Aorta (tissue), 5 donors: ENCODE measurements at regions of chr14 and their contacts with region 1.

Region 1: GRCh38 chr14:75427482-75428229 is at the start of gene JDP2:
- DNase-seq: peak; percentile 96 to 98
- ATAC-seq: peak; percentile 91
- H3K4me3 ChIP-seq: peak within 1 kb of the TSS; percentile 85 to 92
- H3K27ac ChIP-seq: peak within 1 kb of the TSS in 1 of 2 donors; percentile 41
- H3K4me1 ChIP-seq: peaks cover 0 to 12% of the 10 kb centered on the region in 2 donors
- H3K27me3 ChIP-seq: no peaks in the 10 kb centered on the region
- total RNA-seq, gene JDP2: 48.3 to 50.2 TPM

Region 2: GRCh38 chr14:75361751-75362433 is 65.8 kb before region 1 on chr14:
- intact Hi-C with region 1: loop called in 1 of 2 experiments (anchors 5 kb)
- DNase-seq: peak; percentile 67 to 84
- ATAC-seq: peak; percentile 71
- H3K4me3 ChIP-seq: no peak overlapping the region
- H3K27ac ChIP-seq: peak overlapping the region in 1 of 2 donors; percentile 41
- H3K4me1 ChIP-seq: no peaks in the 10 kb centered on the region
- H3K27me3 ChIP-seq: no peaks in the 10 kb centered on the region

Region 3: DNA sequence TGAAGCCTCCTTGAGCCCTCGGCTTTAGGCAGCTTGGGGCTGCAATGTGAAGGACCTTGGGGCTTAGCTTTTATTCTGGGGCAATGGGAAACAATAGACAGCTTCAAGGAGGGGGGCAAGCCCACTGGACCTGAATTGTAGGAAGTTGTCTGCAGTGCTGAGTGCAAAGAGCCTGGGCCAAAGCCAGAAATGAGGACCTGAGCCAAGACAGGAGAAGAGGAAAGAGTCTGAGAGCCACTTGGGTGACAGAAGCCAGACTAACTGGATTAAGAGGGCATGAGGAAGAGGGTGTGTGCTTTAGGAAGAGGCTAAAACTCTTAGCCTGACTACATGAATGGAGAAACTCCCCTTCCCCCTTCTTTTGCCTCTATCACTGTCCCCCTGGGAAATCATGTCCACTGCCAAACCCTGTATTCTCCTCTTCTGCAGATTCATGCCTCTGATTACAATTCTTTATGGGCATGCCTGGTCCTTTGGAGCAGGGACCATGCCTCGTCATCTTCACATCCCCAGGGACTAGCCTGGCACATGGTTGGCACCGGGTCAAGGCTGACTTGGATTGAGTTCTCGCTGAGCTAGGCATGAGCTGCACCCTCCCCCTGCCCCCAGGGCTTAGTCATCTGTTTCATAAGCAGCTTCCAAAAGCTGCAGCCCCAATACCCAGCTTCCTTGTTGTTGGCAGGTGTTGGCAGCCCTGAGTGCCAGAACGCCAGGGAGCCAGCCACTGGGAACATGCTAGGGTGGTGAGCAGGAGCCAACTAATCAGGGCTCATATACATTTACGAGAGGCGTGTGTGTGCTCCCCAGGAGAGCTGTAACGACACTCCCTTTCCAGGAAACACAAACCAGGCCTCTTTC is 27.6 kb before region 1 on chr14:
- intact Hi-C with region 1: loop called in 1 of 2 experiments (anchors 2 kb)
- DNase-seq: peak; percentile 97
- ATAC-seq: peak; percentile 90
- H3K4me3 ChIP-seq: no peak overlapping the region
- H3K27ac ChIP-seq: peak overlapping the region in 1 of 2 donors; percentile 7
- H3K4me1 ChIP-seq: no peaks in the 10 kb centered on the region
- H3K27me3 ChIP-seq: no peaks in the 10 kb centered on the region

Region 4: DNA sequence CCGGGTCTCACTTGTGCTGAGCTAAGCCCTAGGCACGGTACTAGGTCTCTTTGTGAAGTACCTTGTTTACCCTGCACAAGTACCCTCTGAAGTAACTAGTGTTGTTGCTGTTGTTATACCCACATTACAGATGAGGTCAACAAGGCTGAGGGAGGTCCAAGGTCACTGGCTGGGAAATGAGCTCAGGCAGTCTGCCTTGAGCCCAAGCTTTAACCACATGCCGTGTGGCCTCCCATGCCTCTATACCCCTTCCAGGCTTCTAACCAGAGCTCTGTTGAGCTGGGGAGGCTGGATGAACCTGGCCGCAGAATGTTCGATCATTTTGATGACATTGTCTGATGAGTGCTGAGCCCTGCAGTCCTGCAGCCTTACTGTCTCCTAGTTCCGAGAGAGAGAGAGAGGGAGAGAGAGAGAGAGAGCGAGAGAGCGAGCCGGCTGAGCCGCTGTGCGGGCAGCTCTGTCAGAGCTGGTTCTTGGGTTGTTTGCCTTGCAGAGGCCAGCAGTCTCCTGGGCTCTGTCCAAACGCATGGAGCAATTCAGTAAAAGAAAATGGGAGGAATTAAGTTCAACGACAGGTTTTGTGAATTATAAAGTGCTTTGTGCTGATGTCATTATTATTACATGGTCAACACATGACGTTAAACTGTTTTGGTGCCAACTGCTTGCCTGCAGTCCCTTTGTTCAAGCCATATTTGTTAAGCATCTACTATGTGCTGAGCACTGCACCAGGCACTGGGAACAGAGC is 13.2 kb after region 1 on chr14:
- intact Hi-C with region 1: no loop called
- DNase-seq: peak in 1 of 2 donors; percentile 84
- ATAC-seq: peak; percentile 86
- H3K4me3 ChIP-seq: no peak overlapping the region
- H3K27ac ChIP-seq: peak overlapping the region; percentile 46 to 63
- H3K4me1 ChIP-seq: no peaks in the 10 kb centered on the region
- H3K27me3 ChIP-seq: no peaks in the 10 kb centered on the region

Region 5: DNA sequence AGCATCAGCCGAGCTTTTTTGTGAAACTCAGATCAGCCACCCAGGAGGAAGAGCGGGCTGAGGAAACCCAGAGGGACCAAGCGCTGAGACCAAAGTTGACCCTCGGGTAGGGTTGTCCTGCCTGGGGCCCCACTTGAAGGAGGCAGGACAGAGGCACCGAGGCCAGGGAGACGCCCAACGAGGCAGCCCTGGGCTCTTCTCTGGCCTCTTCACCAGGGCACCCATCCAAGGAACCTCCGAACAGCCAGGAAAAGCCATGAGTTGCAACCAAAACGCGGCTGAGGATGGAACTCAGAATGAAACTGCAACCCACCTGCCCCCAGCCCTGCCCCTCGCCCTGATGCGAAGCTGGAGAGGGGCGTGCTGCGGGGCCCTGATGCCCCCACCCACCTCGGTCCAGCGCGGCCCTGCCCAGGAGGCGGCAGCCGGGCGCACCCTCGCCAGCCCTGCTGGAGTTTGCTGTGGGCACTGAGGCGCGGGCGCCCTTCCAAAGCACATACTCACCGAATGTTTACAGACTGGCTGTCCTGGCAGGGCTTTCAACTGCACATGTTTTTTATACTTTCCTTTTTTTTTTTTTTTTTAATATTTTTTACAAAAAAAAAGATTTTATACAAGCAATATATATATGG is 42.1 kb after region 1 on chr14:
- intact Hi-C with region 1: loop called in 1 of 2 experiments (anchors 2 kb)
- DNase-seq: peak; percentile 73 to 91
- ATAC-seq: peak; percentile 76
- H3K4me3 ChIP-seq: no peak overlapping the region
- H3K27ac ChIP-seq: peak overlapping the region in 1 of 2 donors; percentile 1
- H3K4me1 ChIP-seq: peaks cover 0 to 3% of the 10 kb centered on the region in 2 donors
- H3K27me3 ChIP-seq: no peaks in the 10 kb centered on the region